ENCODE measurements at regions of chr2 and their contacts with region 1.

Region 1: GRCh38 chr2:113198790-113199612 is 25.2 kb downstream of the PSD4 start:
- DNase-seq: peak; percentile 87
- H3K4me3 ChIP-seq: peak overlapping the region; percentile 61
- H3K27ac ChIP-seq: peak overlapping the region; percentile 92
- H3K4me1 ChIP-seq: no peaks in the 10 kb centered on the region
- H3K27me3 ChIP-seq: no peaks in the 10 kb centered on the region
- CTCF ChIP-seq: peak; percentile 89

Region 2: GRCh38 chr2:113080134-113080533 is 118.9 kb before region 1 on chr2:
- intact Hi-C with region 1: loop called (anchors 5 kb)
- DNase-seq: peak; percentile 23
- H3K4me3 ChIP-seq: no peak overlapping the region
- H3K27ac ChIP-seq: no peak overlapping the region
- H3K4me1 ChIP-seq: no peaks in the 10 kb centered on the region
- H3K27me3 ChIP-seq: no peaks in the 10 kb centered on the region
- CTCF ChIP-seq: peak; percentile 64

Region 3: DNA sequence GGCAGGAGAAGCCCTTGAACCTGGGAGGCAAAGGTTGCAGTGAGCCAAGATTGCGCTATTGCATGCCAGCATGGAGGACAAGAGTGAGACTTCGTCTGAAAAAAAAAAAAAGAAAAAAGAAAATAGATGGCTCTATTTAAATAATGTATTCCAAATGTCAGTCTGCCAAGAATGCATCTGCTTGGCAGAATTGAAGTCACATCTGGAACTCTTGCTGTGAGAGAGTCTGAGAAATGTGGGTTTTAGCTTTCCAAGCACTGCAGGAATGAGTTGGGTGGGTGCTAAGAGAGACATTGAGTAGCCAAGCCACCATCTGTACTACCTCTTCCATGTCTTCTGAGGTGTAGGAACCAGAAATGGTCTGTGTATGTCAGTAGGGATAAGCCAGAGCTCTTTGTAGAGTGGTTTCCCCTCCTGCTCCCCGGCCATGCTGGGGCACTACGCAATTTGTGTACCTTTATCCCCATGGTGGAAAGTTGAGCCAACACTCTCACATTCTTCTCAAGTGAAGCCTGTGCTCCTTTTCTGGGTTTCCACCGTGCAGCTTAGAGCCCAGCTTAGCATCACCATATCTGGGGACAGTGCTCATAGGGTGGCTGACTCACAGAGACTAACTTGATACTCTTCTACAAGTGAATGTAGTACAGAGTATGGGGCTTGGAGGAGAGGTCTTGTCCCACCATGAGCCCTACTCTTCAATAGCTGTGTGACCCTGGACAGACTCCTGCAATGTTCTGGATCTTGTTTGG is 106.0 kb before region 1 on chr2:
- intact Hi-C with region 1: no loop called
- DNase-seq: no peak
- H3K4me3 ChIP-seq: no peak overlapping the region
- H3K27ac ChIP-seq: no peak overlapping the region
- H3K4me1 ChIP-seq: no peaks in the 10 kb centered on the region
- H3K27me3 ChIP-seq: no peaks in the 10 kb centered on the region
- CTCF ChIP-seq: no peak

Region 4: GRCh38 chr2:113138428-113139322 is 60.3 kb before region 1 on chr2:
- intact Hi-C with region 1: loop called (anchors 2 kb)
- DNase-seq: peak; percentile 77
- H3K4me3 ChIP-seq: no peak overlapping the region
- H3K27ac ChIP-seq: no peak overlapping the region
- H3K4me1 ChIP-seq: no peaks in the 10 kb centered on the region
- H3K27me3 ChIP-seq: no peaks in the 10 kb centered on the region
- CTCF ChIP-seq: peak; percentile 86

Measured in colonic mucosa (tissue), 4 donors.